Caco-2 (cell line): ENCODE measurements at regions of chr21 and their contacts with region 1.

Region 1: GRCh38 chr21:36188081-36188681 is 31.6 kb downstream of the DOP1B start:
- DNase-seq: peak; percentile 79 to 82
- H3K4me3 ChIP-seq: peak overlapping the region; percentile 15; the same call in 1 of the 2 replicates
- H3K4me3 Mint-ChIP-seq: peak overlapping the region; percentile 68
- H3K27ac Mint-ChIP-seq: peak overlapping the region; percentile 79
- H3K4me1 ChIP-seq: peaks cover 40% of the 10 kb centered on the region
- H3K4me1 Mint-ChIP-seq: peaks cover 41% of the 10 kb centered on the region
- H3K27me3 ChIP-seq: no peaks in the 10 kb centered on the region
- H3K27me3 Mint-ChIP-seq: no peaks in the 10 kb centered on the region
- CTCF ChIP-seq: peak in 1 of 2 experiments; percentile 18

Region 2: GRCh38 chr21:36052860-36053714 is 135.1 kb before region 1 on chr21:
- CTCF ChIA-PET with region 1: no interaction called
- POLR2A ChIA-PET with region 1: no interaction called
- intact Hi-C with region 1: no loop called
- DNase-seq: no peak
- H3K4me3 ChIP-seq: no peak overlapping the region
- H3K4me3 Mint-ChIP-seq: no peak overlapping the region
- H3K27ac Mint-ChIP-seq: no peak overlapping the region
- H3K4me1 ChIP-seq: no peaks in the 10 kb centered on the region
- H3K4me1 Mint-ChIP-seq: no peaks in the 10 kb centered on the region
- H3K27me3 ChIP-seq: no peaks in the 10 kb centered on the region
- H3K27me3 Mint-ChIP-seq: no peaks in the 10 kb centered on the region
- CTCF ChIP-seq: no peak

Region 3: GRCh38 chr21:36203617-36203917 is 15.4 kb after region 1 on chr21:
- CTCF ChIA-PET with region 1: interaction called, 5 read pairs
- POLR2A ChIA-PET with region 1: interaction called, 4 read pairs
- intact Hi-C with region 1: loop called (anchors 2 kb)
- DNase-seq: peak in 1 of 2 experiments; percentile 54
- H3K4me3 ChIP-seq: no peak overlapping the region
- H3K4me3 Mint-ChIP-seq: no peak overlapping the region
- H3K27ac Mint-ChIP-seq: peak overlapping the region; percentile 84
- H3K4me1 ChIP-seq: peaks cover 37% of the 10 kb centered on the region
- H3K4me1 Mint-ChIP-seq: peaks cover 35% of the 10 kb centered on the region
- H3K27me3 ChIP-seq: no peaks in the 10 kb centered on the region
- H3K27me3 Mint-ChIP-seq: no peaks in the 10 kb centered on the region
- CTCF ChIP-seq: no peak

Region 4: GRCh38 chr21:36350282-36350910 is 162.2 kb after region 1 on chr21:
- CTCF ChIA-PET with region 1: no interaction called
- POLR2A ChIA-PET with region 1: interaction called, 12 read pairs
- intact Hi-C with region 1: no loop called
- DNase-seq: no peak
- H3K4me3 ChIP-seq: no peak overlapping the region
- H3K4me3 Mint-ChIP-seq: no peak overlapping the region
- H3K27ac Mint-ChIP-seq: no peak overlapping the region
- H3K4me1 ChIP-seq: no peaks in the 10 kb centered on the region
- H3K4me1 Mint-ChIP-seq: peaks cover 7% of the 10 kb centered on the region
- H3K27me3 ChIP-seq: no peaks in the 10 kb centered on the region
- H3K27me3 Mint-ChIP-seq: no peaks in the 10 kb centered on the region
- CTCF ChIP-seq: no peak